Right cardiac atrium (tissue), 5 donors: ENCODE measurements at regions of chrX and their contacts with region 1.

Region 1: GRCh38 chrX:37926700-37927099 is 79.3 kb upstream of the DYNLT3 start:
- DNase-seq: no peak
- ATAC-seq: peak in 1 of 2 donors; percentile 41
- H3K4me3 ChIP-seq: no peak overlapping the region
- H3K27ac ChIP-seq: no peak overlapping the region
- H3K4me1 ChIP-seq: no peaks in the 10 kb centered on the region
- H3K27me3 ChIP-seq: no peaks in the 10 kb centered on the region

Region 2: DNA sequence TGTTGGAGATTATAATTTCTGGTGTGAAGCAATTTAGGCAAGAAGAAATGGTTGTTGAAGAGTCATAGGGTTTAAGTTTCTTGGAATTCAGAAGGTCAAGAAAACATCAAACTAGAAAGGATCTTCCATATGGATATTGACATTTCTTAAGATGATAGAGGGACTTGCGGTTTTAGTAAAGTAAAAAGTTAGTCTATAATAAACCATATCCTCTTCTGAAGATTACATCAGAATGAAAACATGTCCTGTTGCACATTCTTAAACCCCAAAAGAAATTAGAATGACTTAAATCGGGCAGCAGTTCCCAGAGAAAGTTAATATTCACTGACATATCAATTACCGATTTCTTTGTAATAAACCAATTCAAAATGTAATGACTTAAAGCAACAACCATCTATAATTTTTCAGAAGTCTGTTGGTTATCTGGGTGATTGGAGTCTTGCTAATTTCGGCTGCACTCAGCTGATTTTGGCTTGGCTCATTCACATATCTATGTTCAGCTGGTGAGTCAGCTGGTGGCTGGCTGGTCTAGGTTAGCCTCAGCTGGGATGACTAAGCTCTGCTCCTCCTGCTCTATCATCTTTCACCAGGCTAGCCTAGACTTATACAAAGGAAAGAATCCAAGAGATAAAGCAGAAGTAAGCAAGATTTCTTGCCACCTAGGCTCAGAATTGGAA is 54.9 kb before region 1 on chrX:
- intact Hi-C with region 1: no loop called
- DNase-seq: peak in 1 of 3 donors; percentile 30
- ATAC-seq: peak in 1 of 2 donors; percentile 79
- H3K4me3 ChIP-seq: no peak overlapping the region
- H3K27ac ChIP-seq: no peak overlapping the region
- H3K4me1 ChIP-seq: no peaks in the 10 kb centered on the region
- H3K27me3 ChIP-seq: no peaks in the 10 kb centered on the region

Region 3: GRCh38 chrX:38166478-38167083 is 239.9 kb after region 1 on chrX:
- intact Hi-C with region 1: loop called in 3 of 4 experiments (anchors 10 kb)
- DNase-seq: no peak
- ATAC-seq: no peak
- H3K4me3 ChIP-seq: no peak overlapping the region
- H3K27ac ChIP-seq: no peak overlapping the region
- H3K4me1 ChIP-seq: peaks cover 2% of the 10 kb centered on the region
- H3K27me3 ChIP-seq: no peaks in the 10 kb centered on the region

Region 4: DNA sequence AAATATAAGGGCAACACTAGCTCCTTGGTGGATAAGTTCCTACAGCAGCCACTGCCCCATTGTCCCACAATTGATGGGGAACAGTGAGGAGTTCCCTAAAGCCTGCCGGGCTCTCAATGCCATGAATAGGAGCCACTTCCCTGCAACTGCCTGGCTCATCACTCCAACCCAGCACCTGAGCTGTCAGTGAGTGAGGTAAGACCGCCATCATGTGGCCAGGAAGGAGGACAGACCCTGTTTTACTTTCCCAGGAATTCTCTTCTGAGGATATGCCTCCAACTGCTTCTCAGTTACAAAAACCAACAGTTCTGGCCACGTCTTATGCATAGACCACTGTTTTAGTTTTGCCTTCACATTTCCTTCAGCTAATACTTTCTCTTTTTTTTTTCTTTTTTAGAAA is 248.4 kb after region 1 on chrX:
- intact Hi-C with region 1: loop called in 1 of 4 experiments (anchors 10 kb)
- DNase-seq: no peak
- ATAC-seq: peak in 1 of 2 donors; percentile 35
- H3K4me3 ChIP-seq: no peak overlapping the region
- H3K27ac ChIP-seq: no peak overlapping the region
- H3K4me1 ChIP-seq: no peaks in the 10 kb centered on the region
- H3K27me3 ChIP-seq: no peaks in the 10 kb centered on the region

Region 5: GRCh38 chrX:38282044-38282443 is 355.3 kb after region 1 on chrX:
- intact Hi-C with region 1: loop called in 1 of 4 experiments (anchors 5 kb)
- DNase-seq: peak in 2 of 3 donors; percentile 16 to 51
- ATAC-seq: peak; percentile 59 to 71
- H3K4me3 ChIP-seq: no peak overlapping the region
- H3K27ac ChIP-seq: no peak overlapping the region
- H3K4me1 ChIP-seq: no peaks in the 10 kb centered on the region
- H3K27me3 ChIP-seq: no peaks in the 10 kb centered on the region

Region 6: DNA sequence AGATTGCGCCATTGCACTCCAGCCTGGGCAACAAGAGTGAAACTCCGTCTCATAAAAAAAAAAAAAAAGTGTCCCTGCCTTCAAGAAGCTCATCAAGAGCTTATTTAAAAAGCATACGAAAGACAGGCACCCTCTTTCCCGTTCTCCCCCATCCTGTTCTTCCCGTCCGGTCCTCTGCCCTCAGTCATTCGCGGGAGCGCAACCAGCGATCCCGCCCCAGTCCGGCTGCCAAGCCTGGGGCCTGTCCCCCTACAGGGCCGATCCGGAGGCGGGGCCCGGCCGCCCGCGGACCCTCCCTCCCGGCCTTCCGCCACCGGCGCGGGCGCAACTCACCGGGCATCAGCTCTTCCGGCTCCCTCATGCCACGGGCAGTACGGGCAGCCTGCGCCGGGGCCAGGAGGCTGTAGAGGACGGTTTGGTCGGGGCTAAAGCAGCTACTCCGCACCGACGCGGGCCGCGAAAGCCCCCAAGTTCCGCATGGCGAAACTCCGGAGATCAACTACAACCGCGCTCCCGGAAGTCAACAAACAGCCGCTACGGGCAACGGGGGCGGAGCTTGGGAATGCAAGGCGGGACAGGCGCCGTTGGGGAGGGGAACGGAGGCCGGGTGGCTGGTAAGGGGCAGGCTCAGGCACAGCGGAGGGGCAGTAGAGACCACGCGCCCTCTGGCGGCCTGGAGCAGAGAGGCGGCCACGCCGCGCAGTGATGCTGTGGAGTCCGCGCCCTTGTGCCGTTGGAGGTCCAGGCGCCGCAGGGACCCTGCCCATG is 400.5 kb after region 1 on chrX and contains the start of gene RPGR:
- intact Hi-C with region 1: loop called in 1 of 4 experiments (anchors 5 kb)
- DNase-seq: peak; percentile 94 to 98 (median 98)
- ATAC-seq: peak; percentile 98 to 99
- H3K4me3 ChIP-seq: peak within 1 kb of the TSS; percentile 68
- H3K27ac ChIP-seq: peak within 1 kb of the TSS; percentile 87
- H3K4me1 ChIP-seq: peaks cover 1% of the 10 kb centered on the region
- H3K27me3 ChIP-seq: no peaks in the 10 kb centered on the region
- total RNA-seq, gene RPGR: 4.2 to 9.5 (median 7.9) TPM